ENCODE measurements at regions of chr13 and their contacts with region 1.

Region 1: GRCh38 chr13:27362064-27362883 is 62.1 kb upstream of the GTF3A start:
- DNase-seq: peak; percentile 70
- H3K4me3 ChIP-seq: peak overlapping the region in 2 of 3 experiments; percentile 12 to 29
- H3K27ac ChIP-seq: no peak overlapping the region
- H3K4me1 ChIP-seq: no peaks in the 10 kb centered on the region
- H3K27me3 ChIP-seq: peaks cover 6 to 19% of the 10 kb centered on the region in 2 experiments
- CTCF ChIP-seq: peak; percentile 93 to 99
- POLR2A ChIP-seq: no peak

Region 2: DNA sequence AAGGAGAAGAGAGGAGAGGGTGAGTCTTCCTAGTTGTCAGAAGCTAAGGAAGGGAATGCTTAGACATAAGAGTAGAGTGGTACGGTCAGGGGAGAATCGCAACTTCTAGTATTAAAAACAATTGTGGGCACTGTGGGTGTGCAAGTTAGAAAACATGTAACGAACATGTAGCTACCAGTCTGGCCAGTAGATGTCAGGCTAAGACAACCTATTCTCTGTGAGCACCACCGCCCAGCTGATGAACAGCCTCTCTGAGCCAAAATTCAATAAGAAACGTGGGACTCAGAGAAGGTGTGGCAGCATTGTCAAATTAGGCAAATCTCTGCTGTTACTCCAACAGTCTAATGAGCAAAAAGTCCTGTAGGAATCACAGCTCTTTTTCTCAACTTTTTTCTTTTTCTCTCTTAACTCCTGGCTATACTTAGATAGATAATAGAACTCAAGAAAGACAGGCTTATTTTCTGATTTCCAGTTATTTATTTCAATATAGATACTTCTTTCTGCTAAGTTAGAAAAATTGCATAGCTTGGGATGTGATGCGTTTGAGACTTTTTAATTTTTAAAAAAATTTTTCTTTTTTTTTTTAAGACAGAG is 376.9 kb before region 1 on chr13:
- CTCF ChIA-PET with region 1: interaction called, 343 read pairs
- POLR2A ChIA-PET with region 1: no interaction called
- dilution Hi-C with region 1: no loop called
- intact Hi-C with region 1: loop called (anchors 1 kb)
- DNase-seq: peak; percentile 77
- H3K4me3 ChIP-seq: no peak overlapping the region
- H3K27ac ChIP-seq: no peak overlapping the region
- H3K4me1 ChIP-seq: peaks cover 4% of the 10 kb centered on the region
- H3K27me3 ChIP-seq: peaks cover 2 to 4% of the 10 kb centered on the region in 2 experiments
- CTCF ChIP-seq: peak; percentile 63 to 74
- POLR2A ChIP-seq: no peak

Region 3: GRCh38 chr13:27283906-27284493 is 78.3 kb before region 1 on chr13:
- CTCF ChIA-PET with region 1: interaction called, 7 read pairs
- POLR2A ChIA-PET with region 1: no interaction called
- dilution Hi-C with region 1: no loop called
- intact Hi-C with region 1: loop called (anchors 1 kb)
- DNase-seq: peak; percentile 26
- H3K4me3 ChIP-seq: no peak overlapping the region
- H3K27ac ChIP-seq: no peak overlapping the region
- H3K4me1 ChIP-seq: no peaks in the 10 kb centered on the region
- H3K27me3 ChIP-seq: peaks cover 2 to 3% of the 10 kb centered on the region in 2 experiments
- CTCF ChIP-seq: peak; percentile 39 to 43
- POLR2A ChIP-seq: no peak

Region 4: GRCh38 chr13:27424246-27425157 is 62.2 kb after region 1 on chr13 and contains the start of gene GTF3A:
- CTCF ChIA-PET with region 1: interaction called, 15 read pairs
- POLR2A ChIA-PET with region 1: no interaction called
- dilution Hi-C with region 1: no loop called
- intact Hi-C with region 1: no loop called
- DNase-seq: peak; percentile 91
- H3K4me3 ChIP-seq: peak within 1 kb of the TSS; percentile 23 to 66 (median 57)
- H3K27ac ChIP-seq: peak within 1 kb of the TSS; percentile 69
- H3K4me1 ChIP-seq: peaks cover 25% of the 10 kb centered on the region
- H3K27me3 ChIP-seq: no peaks in the 10 kb centered on the region
- CTCF ChIP-seq: no peak
- POLR2A ChIP-seq: peak; percentile 89
- total RNA-seq, gene GTF3A: 71.2 and 73.3 TPM in 2 replicates

Region 5: DNA sequence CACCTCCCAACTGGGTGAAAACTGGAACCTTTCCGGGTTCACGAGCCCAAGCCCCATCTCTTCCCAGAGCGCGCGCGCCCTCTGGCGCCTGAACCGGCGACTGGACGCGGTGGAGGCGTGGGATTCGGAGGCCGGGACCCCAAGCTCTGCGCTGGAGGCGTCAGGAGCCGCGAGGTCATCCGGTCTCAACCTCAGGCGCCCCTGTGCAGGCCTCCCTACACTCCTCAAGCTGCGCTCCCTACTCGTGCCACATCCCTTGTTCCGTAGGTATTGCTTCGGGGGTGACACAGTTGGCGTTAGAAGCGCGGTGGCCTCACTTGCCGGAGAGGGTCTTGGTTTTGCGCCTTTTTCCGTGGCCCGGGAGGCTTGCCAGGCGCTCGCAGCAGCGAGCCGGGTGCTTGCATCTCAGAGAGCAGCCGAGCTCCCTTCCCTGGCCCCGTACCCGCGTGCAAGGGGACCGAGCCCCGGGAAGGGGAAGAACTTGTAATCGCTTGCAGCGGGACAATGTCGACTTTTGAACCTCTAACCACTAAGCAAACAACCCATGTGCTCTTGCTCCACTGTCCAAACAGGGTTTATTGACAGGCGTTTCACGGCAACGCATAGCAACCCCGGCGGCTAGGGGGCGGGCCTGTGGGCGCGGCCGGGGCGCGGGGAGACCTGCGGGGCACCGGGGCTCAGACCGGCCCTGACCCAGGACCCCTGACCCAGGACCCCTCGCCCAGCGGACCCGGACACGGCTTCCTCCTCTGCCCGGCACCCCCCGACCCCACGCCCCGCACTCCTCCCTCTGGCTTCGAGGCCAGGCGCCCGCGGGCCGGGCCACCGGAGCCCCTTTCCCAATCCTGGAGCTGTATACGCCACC is 598.3 kb after region 1 on chr13:
- CTCF ChIA-PET with region 1: interaction called, 12 read pairs
- POLR2A ChIA-PET with region 1: no interaction called
- dilution Hi-C with region 1: no loop called
- intact Hi-C with region 1: loop called (anchors 10 kb)
- DNase-seq: no peak
- H3K4me3 ChIP-seq: no peak overlapping the region
- H3K27ac ChIP-seq: no peak overlapping the region
- H3K4me1 ChIP-seq: peaks cover 3% of the 10 kb centered on the region
- H3K27me3 ChIP-seq: peaks cover 65 to 93% of the 10 kb centered on the region in 2 experiments
- CTCF ChIP-seq: peak; percentile 46 to 54
- POLR2A ChIP-seq: no peak

Region 6: DNA sequence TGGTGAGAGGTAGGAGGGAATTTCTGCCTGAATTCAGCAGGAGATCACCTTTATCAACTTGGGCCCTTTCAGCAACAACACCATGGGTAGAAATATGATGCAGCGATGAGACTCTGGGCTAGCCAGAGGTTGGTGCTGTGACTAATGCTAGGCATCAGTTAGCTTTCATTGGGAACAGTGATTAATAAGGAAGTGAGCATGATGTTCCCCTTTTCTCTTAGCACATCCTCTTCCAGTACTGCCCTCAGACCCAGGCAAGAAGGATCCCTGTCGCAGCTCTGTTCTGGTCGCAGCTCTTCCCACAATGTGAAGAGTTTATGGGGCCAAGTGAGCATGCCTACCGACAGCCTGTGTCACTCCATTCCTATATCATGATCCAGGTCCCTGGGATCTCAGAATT is 1032.1 kb after region 1 on chr13:
- CTCF ChIA-PET with region 1: no interaction called
- POLR2A ChIA-PET with region 1: no interaction called
- dilution Hi-C with region 1: no loop called
- intact Hi-C with region 1: no loop called
- DNase-seq: peak; percentile 57
- H3K4me3 ChIP-seq: no peak overlapping the region
- H3K27ac ChIP-seq: peak overlapping the region; percentile 88
- H3K4me1 ChIP-seq: peaks cover 81% of the 10 kb centered on the region
- H3K27me3 ChIP-seq: no peaks in the 10 kb centered on the region
- CTCF ChIP-seq: no peak
- POLR2A ChIP-seq: no peak

Measured in endothelial cell of umbilical vein (primary cell).